ENCODE measurements at regions of chr11 and their contacts with region 1.

Region 1: DNA sequence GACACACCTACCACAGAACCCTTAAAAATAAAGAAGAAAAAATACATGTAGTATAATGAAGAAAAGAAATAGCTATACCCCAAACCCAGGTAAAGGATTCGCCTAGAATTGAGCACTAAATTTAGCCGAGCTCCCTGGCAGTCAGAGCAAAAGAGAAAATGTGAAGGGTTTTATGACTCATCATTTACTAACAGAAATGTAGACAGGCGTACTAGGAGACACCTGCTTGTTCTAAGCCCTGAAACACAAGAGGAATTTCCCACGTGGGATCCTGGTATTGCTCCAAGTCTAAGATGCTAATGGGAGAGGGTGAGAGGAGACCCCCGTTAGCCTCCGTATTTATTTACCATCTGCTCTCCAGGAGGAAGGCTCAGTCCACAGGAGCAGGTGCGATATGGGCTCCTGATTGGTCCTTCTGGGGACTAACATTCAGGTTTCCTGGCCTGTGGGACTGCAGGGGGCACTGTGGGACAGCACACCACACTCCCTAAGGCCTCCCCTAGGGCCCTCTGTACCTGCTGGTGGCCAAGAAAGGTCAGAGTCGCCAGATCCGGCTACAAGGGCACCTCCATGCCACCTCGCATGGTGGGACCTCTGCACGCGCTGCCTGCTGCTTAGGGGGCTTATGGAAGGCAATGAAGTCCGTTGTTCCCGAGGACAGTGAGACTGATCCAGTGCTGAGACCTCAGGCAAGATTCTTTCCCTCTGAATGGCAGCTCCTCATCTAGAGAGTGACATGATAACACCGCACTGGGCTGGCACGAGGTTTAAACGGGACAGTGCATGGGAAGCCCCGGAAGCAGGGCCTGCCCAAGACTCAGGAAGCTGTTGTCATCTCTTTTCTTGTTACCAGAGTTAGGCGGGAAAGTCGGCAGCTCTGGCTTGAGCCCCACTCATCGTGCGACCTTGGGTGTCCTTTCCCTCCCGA is 25.8 kb downstream of the KCNC1 start:
- DNase-seq: peak; percentile 51
- ATAC-seq: peak; percentile 69

Region 2: DNA sequence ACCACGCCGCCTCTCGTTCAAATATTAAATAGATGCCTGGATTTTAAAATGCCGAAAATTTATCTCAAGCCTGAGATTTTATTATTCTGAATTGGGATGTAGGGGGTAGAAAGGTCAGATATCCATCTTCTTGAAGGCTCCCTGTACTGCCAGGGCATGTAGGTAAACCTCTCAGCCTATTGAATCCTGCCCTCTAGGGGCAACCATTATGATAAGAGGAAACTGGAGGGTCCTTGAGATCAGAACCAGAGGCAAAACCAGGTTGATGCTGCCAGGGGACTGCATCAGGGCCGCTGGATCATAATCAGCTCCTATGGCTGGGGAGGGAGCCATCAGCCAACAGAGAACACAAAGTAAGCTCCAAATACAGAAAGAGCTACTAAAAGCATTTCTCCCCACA is 66.6 kb after region 1 on chr11:
- intact Hi-C with region 1: loop called (anchors 5 kb)
- DNase-seq: no peak
- ATAC-seq: no peak

Region 3: DNA sequence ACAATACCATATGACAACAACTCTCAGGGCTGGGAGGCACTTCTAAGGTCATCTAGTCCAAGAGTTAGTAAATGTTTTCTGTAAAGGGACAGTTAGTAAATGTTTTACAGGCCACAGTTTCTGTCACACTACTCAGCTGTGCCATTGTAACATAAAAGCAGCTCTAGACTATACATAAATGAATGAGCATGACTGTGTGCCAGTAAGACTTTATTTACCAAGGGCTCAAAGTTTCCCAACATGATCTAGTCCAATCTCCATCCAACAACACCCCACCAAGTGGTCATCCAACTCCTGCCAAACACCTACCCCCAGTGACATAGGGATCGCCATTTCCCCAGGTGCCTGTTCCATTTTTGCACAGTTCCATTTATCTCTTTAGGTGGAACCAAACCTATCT is 240.4 kb after region 1 on chr11:
- intact Hi-C with region 1: no loop called
- DNase-seq: no peak
- ATAC-seq: no peak

Measured in Right ventricle myocardium inferior (tissue), 1 donor.